Naive thymus-derived CD4-positive, alpha-beta T cell (primary cell): ENCODE measurements at regions of chr6 and their contacts with region 1.

Region 1: GRCh38 chr6:159789377-159790148 is at the start of gene TCP1:
- DNase-seq: peak; percentile 87 to 99 (median 98)
- ATAC-seq: peak; percentile 89
- H3K4me3 ChIP-seq: peak within 1 kb of the TSS; percentile 98
- H3K4me3 Mint-ChIP-seq: peak within 1 kb of the TSS; percentile 94 to 100 (median 99)
- H3K27ac ChIP-seq: peak within 1 kb of the TSS; percentile 94
- H3K27ac Mint-ChIP-seq: peak within 1 kb of the TSS; percentile 95 to 99 (median 98)
- H3K4me1 ChIP-seq: peaks cover 15 to 27% of the 10 kb centered on the region in 2 donors
- H3K4me1 Mint-ChIP-seq: peaks cover 41 to 83% (median 69%) of the 10 kb centered on the region in 7 donors
- H3K27me3 ChIP-seq: no peaks in the 10 kb centered on the region
- H3K27me3 Mint-ChIP-seq: peaks cover 0 to 3% (median 0%) of the 10 kb centered on the region in 5 donors
- total RNA-seq, gene TCP1: 147 to 225 (median 154) TPM

Region 2: GRCh38 chr6:159104163-159104925 is 685.2 kb before region 1 on chr6:
- CTCF ChIA-PET with region 1: no interaction called
- POLR2A ChIA-PET with region 1: no interaction called
- intact Hi-C with region 1: loop called in 1 of 2 experiments (anchors 1 kb)
- DNase-seq: peak; percentile 68 to 81 (median 77)
- ATAC-seq: peak; percentile 79
- H3K4me3 ChIP-seq: peak overlapping the region; percentile 5
- H3K4me3 Mint-ChIP-seq: peak overlapping the region in 9 of 10 donors; percentile 40 to 69 (median 54)
- H3K27ac ChIP-seq: peak overlapping the region; percentile 79
- H3K27ac Mint-ChIP-seq: peak overlapping the region; percentile 82 to 98 (median 91)
- H3K4me1 ChIP-seq: peaks cover 58 to 73% of the 10 kb centered on the region in 2 donors
- H3K4me1 Mint-ChIP-seq: peaks cover 58 to 96% (median 86%) of the 10 kb centered on the region in 7 donors
- H3K27me3 ChIP-seq: no peaks in the 10 kb centered on the region
- H3K27me3 Mint-ChIP-seq: no peaks in the 10 kb centered on the region

Region 3: DNA sequence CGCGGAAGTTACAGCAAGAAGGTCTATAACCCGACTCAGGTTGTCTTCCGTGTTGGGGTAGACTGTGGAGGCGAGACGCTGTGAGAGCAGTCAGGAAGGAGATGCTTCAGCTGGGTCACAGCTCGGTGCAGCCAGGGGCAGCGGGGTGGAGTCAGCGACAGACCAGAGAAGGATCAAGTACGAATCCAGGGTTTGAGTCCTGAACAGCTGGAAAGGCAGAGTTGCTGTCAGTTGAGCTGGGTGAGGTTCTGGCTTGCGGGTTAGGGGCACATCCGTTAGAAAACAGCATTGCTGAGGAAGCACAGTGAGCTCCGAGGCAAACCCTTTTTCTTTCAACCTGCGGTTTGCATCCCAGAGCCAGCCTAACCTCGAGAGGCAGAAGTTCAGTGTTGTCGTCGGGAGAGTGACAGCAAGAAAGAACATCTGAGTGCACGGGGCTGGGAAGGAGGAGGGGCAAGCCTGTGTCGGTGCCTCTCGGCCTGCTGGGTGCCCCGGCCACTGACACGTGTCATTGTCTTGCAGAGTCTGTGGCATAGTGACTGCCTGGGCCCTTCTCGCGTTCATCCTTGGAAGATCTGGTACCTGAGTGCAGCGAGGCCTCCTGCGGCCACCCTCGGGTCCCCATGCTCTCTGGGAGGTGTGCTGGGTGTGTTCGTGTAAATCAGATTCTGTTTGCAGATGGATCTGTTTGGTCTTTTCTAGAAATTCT is 30.5 kb after region 1 on chr6:
- CTCF ChIA-PET with region 1: interaction called, 3 read pairs
- POLR2A ChIA-PET with region 1: interaction called, 18 read pairs
- intact Hi-C with region 1: loop called (anchors 1 to 2 kb)
- DNase-seq: peak in 8 of 9 donors; percentile 16 to 74 (median 65)
- ATAC-seq: peak; percentile 82
- H3K4me3 ChIP-seq: peak overlapping the region; percentile 40
- H3K4me3 Mint-ChIP-seq: peak overlapping the region; percentile 81 to 93 (median 86)
- H3K27ac ChIP-seq: peak overlapping the region; percentile 43
- H3K27ac Mint-ChIP-seq: peak overlapping the region; percentile 80 to 97 (median 94)
- H3K4me1 ChIP-seq: peaks cover 0 to 32% of the 10 kb centered on the region in 2 donors
- H3K4me1 Mint-ChIP-seq: peaks cover 15 to 49% (median 30%) of the 10 kb centered on the region in 7 donors
- H3K27me3 ChIP-seq: no peaks in the 10 kb centered on the region
- H3K27me3 Mint-ChIP-seq: no peaks in the 10 kb centered on the region

Region 4: GRCh38 chr6:159941286-159942113 is 151.9 kb after region 1 on chr6:
- CTCF ChIA-PET with region 1: interaction called, 3 read pairs
- POLR2A ChIA-PET with region 1: no interaction called
- intact Hi-C with region 1: loop called in 1 of 2 experiments (anchors 1 kb)
- DNase-seq: peak in 7 of 9 donors; percentile 23 to 55 (median 40)
- ATAC-seq: peak; percentile 85
- H3K4me3 ChIP-seq: no peak overlapping the region
- H3K4me3 Mint-ChIP-seq: no peak overlapping the region
- H3K27ac ChIP-seq: no peak overlapping the region
- H3K27ac Mint-ChIP-seq: no peak overlapping the region
- H3K4me1 ChIP-seq: no peaks in the 10 kb centered on the region
- H3K4me1 Mint-ChIP-seq: peaks cover 0 to 7% (median 0%) of the 10 kb centered on the region in 7 donors
- H3K27me3 ChIP-seq: no peaks in the 10 kb centered on the region
- H3K27me3 Mint-ChIP-seq: peaks cover 0 to 28% (median 3%) of the 10 kb centered on the region in 5 donors

Region 5: DNA sequence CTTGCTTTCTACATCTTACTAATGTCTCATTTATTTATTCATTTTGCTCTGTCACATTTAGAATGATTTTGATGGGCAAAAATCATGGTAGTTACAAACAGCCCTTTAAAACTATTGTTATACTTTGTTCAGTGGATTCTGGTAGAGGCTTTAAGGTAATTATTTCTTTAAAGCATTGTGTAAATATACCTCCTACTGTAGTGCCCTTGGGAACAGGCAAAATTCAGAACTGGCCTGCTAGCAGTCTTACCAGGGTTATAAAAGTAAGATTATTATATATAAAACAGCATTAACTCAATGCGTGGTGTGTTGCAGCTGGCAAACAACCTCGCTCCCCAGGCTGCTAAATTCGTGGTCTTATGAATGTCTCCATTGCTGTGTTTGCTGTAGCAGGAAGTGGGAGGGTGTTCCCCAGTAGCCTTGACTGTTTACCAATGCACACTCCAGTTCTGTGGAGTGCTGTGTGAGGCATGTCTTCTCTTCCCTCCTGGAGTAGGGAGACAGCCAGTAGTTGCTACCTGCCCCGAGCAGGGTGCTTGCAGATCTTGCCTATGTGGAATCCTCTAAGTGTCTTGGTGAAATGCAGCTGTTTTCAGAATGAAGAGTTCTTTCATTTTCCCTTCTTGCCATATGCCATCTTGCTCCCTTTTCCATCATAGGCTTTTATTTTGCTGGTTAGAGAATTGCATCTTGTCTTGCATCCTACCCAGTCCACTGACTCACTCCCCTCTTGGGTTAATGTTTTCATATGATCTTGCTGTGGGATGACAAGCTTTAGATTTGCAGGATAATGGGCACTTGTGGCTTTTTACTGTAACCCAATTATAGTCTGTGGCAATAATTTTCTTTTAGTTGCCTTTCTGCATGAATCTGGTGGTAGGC is 224.7 kb after region 1 on chr6:
- CTCF ChIA-PET with region 1: no interaction called
- POLR2A ChIA-PET with region 1: interaction called, 8 read pairs
- intact Hi-C with region 1: loop called in 1 of 2 experiments (anchors 2 kb)
- DNase-seq: peak in 7 of 9 donors; percentile 12 to 31 (median 25)
- ATAC-seq: peak; percentile 72
- H3K4me3 ChIP-seq: peak overlapping the region; percentile 24
- H3K4me3 Mint-ChIP-seq: peak overlapping the region; percentile 50 to 86 (median 75)
- H3K27ac ChIP-seq: peak overlapping the region; percentile 52
- H3K27ac Mint-ChIP-seq: peak overlapping the region; percentile 82 to 96 (median 89)
- H3K4me1 ChIP-seq: peaks cover 33 to 39% of the 10 kb centered on the region in 2 donors
- H3K4me1 Mint-ChIP-seq: peaks cover 49 to 82% (median 69%) of the 10 kb centered on the region in 7 donors
- H3K27me3 ChIP-seq: no peaks in the 10 kb centered on the region
- H3K27me3 Mint-ChIP-seq: no peaks in the 10 kb centered on the region

Region 6: GRCh38 chr6:160198606-160199211 is 409.1 kb after region 1 on chr6:
- CTCF ChIA-PET with region 1: no interaction called
- POLR2A ChIA-PET with region 1: no interaction called
- intact Hi-C with region 1: no loop called
- DNase-seq: no peak
- ATAC-seq: no peak
- H3K4me3 ChIP-seq: no peak overlapping the region
- H3K4me3 Mint-ChIP-seq: peak overlapping the region in 1 of 10 donors; percentile 25
- H3K27ac ChIP-seq: no peak overlapping the region
- H3K27ac Mint-ChIP-seq: no peak overlapping the region
- H3K4me1 ChIP-seq: no peaks in the 10 kb centered on the region
- H3K4me1 Mint-ChIP-seq: no peaks in the 10 kb centered on the region
- H3K27me3 ChIP-seq: no peaks in the 10 kb centered on the region
- H3K27me3 Mint-ChIP-seq: peaks cover 6 to 34% (median 23%) of the 10 kb centered on the region in 5 donors

Region 7: GRCh38 chr6:160520043-160520904 is 730.7 kb after region 1 on chr6:
- CTCF ChIA-PET with region 1: no interaction called
- POLR2A ChIA-PET with region 1: no interaction called
- intact Hi-C with region 1: loop called in 1 of 2 experiments (anchors 1 kb)
- DNase-seq: peak; percentile 47 to 81 (median 69)
- ATAC-seq: peak; percentile 82
- H3K4me3 ChIP-seq: peak overlapping the region; percentile 75
- H3K4me3 Mint-ChIP-seq: peak overlapping the region; percentile 91 to 97 (median 95)
- H3K27ac ChIP-seq: peak overlapping the region; percentile 70
- H3K27ac Mint-ChIP-seq: peak overlapping the region; percentile 81 to 96 (median 87)
- H3K4me1 ChIP-seq: peaks cover 0 to 14% of the 10 kb centered on the region in 2 donors
- H3K4me1 Mint-ChIP-seq: peaks cover 13 to 32% (median 24%) of the 10 kb centered on the region in 7 donors
- H3K27me3 ChIP-seq: no peaks in the 10 kb centered on the region
- H3K27me3 Mint-ChIP-seq: peaks cover 0 to 59% (median 0%) of the 10 kb centered on the region in 5 donors